ENCODE measurements at regions of chrX and their contacts with region 1.

Region 1: GRCh38 chrX:78555401-78555980 is 103.6 kb downstream of the RTL3 start:
- DNase-seq: no peak
- ATAC-seq: peak; percentile 48; the same call in 2 of the 3 replicates
- H3K4me3 ChIP-seq: no peak overlapping the region
- H3K27ac ChIP-seq: no peak overlapping the region
- H3K4me1 ChIP-seq: no peaks in the 10 kb centered on the region
- H3K27me3 ChIP-seq: no peaks in the 10 kb centered on the region
- CTCF ChIP-seq: peak; percentile 28 to 58 (median 49); a peak in 4 of 6 replicates
- EP300 ChIP-seq: no peak
- POLR2A ChIP-seq: no peak
- RAD21 ChIP-seq: peak; percentile 79

Region 2: DNA sequence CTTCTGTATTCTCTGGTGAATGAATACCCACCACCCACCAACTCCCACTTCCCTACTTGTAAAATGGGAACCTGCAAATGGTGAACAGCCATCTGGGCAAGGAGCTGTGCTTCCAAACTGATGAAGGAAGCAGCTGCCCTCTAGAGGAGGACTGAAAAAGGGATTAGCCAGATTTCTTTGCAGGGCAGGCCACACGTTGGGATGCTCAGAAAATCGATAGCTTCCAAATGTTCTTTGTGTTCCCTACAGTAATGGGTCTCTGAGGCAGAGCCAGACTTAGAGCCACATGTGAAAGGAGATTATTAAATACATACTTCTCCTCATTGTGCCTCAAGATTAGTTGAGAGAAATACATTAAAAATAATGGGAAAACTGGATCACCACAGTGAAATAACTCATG is 152.8 kb after region 1 on chrX:
- CTCF ChIA-PET with region 1: interaction called, 38 read pairs
- POLR2A ChIA-PET with region 1: no interaction called
- RAD21 ChIA-PET with region 1: interaction called, 25 read pairs
- SMC1A ChIA-PET with region 1: interaction called, 21 read pairs
- in situ Hi-C with region 1: no loop called
- intact Hi-C with region 1: loop called (anchors 1 kb)
- DNase-seq: no peak
- ATAC-seq: peak; percentile 46; the same call in 2 of the 3 replicates
- H3K4me3 ChIP-seq: no peak overlapping the region
- H3K27ac ChIP-seq: no peak overlapping the region
- H3K4me1 ChIP-seq: no peaks in the 10 kb centered on the region
- H3K27me3 ChIP-seq: no peaks in the 10 kb centered on the region
- CTCF ChIP-seq: peak; percentile 26 to 43 (median 36); a peak in 5 of 6 replicates
- EP300 ChIP-seq: no peak
- POLR2A ChIP-seq: no peak
- RAD21 ChIP-seq: peak; percentile 61

Region 3: GRCh38 chrX:78886550-78886949 is 331.1 kb after region 1 on chrX:
- CTCF ChIA-PET with region 1: no interaction called
- POLR2A ChIA-PET with region 1: no interaction called
- RAD21 ChIA-PET with region 1: interaction called, 4 read pairs
- SMC1A ChIA-PET with region 1: interaction called, 7 read pairs
- in situ Hi-C with region 1: no loop called
- intact Hi-C with region 1: loop called (anchors 2 kb)
- DNase-seq: peak; percentile 5
- ATAC-seq: peak; percentile 85
- H3K4me3 ChIP-seq: no peak overlapping the region
- H3K27ac ChIP-seq: no peak overlapping the region
- H3K4me1 ChIP-seq: no peaks in the 10 kb centered on the region
- H3K27me3 ChIP-seq: no peaks in the 10 kb centered on the region
- CTCF ChIP-seq: peak; percentile 28 to 47 (median 38); a peak in 3 of 6 replicates
- EP300 ChIP-seq: no peak
- POLR2A ChIP-seq: no peak
- RAD21 ChIP-seq: no peak

Region 4: GRCh38 chrX:79444694-79445210 is 889.3 kb after region 1 on chrX:
- CTCF ChIA-PET with region 1: interaction called, 8 read pairs
- POLR2A ChIA-PET with region 1: interaction called, 3 read pairs
- RAD21 ChIA-PET with region 1: no interaction called
- SMC1A ChIA-PET with region 1: interaction called, 8 read pairs
- in situ Hi-C with region 1: loop called (anchors 25 kb)
- intact Hi-C with region 1: no loop called
- DNase-seq: no peak
- ATAC-seq: no peak
- H3K4me3 ChIP-seq: no peak overlapping the region
- H3K27ac ChIP-seq: no peak overlapping the region
- H3K4me1 ChIP-seq: no peaks in the 10 kb centered on the region
- H3K27me3 ChIP-seq: no peaks in the 10 kb centered on the region
- CTCF ChIP-seq: no peak
- EP300 ChIP-seq: no peak
- POLR2A ChIP-seq: no peak
- RAD21 ChIP-seq: no peak

Region 5: GRCh38 chrX:79524642-79525041 is 969.2 kb after region 1 on chrX:
- CTCF ChIA-PET with region 1: interaction called, 3 read pairs
- POLR2A ChIA-PET with region 1: no interaction called
- RAD21 ChIA-PET with region 1: no interaction called
- SMC1A ChIA-PET with region 1: interaction called, 3 read pairs
- in situ Hi-C with region 1: no loop called
- intact Hi-C with region 1: loop called (anchors 10 kb)
- DNase-seq: no peak
- ATAC-seq: peak; percentile 78
- H3K4me3 ChIP-seq: no peak overlapping the region
- H3K27ac ChIP-seq: no peak overlapping the region
- H3K4me1 ChIP-seq: no peaks in the 10 kb centered on the region
- H3K27me3 ChIP-seq: no peaks in the 10 kb centered on the region
- CTCF ChIP-seq: peak; percentile 16 to 51 (median 49); a peak in 4 of 6 replicates
- EP300 ChIP-seq: no peak
- POLR2A ChIP-seq: no peak
- RAD21 ChIP-seq: peak; percentile 20; the same call in 1 of the 2 replicates

Measured in GM12878 (cell line).